ENCODE measurements at regions of chr4 and their contacts with region 1.

Region 1: DNA sequence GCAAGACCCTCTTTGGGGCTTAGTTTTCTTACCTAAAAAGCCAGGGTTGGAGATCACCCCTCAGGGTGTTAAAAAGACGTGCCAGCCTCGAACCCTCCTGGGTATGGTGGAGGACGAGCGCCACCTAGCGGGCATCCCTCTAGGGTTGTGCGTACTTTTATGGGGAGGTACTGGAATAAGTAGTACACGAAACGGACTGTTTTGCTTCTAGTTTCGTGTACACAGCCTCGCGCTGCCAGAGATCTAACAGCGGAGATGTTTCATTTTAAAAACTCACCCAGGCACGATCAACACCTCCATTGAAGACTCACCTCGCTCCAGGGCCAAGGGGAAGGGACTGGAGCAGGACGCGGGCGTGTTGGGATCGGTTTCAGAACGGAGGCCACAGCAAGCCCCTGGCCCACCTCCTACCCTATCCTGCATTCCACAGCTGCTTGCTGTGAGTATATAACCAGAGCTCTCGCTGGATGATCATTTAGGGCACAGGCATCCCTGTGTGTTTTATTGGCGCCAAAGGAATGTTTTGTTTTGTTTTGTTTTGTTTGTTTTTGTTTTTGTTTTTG is 4.8 kb upstream of the NKX3-2 start:
- DNase-seq: peak; percentile 86
- CTCF ChIP-seq: peak; percentile 84

Region 2: DNA sequence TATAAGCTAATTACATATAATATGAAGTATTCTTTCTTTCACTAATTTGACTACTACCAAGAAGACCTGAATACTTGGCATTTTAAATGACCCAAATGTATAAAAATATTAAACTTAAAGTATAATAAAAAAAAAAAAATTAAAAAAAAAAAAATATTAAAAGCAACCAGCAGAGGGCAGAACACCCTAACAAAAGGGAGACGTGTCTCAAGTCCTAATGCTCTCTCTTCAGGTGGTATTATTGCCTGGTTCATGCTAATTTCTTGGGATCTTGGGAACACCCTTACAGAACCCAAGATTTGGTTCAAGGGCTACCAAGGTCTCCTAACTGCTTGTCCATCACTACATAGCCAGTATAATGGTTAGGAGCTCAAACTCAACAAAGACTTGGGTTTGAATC is 819.7 kb before region 1 on chr4:
- CTCF ChIA-PET with region 1: interaction called, 13 read pairs
- POLR2A ChIA-PET with region 1: no interaction called
- DNase-seq: peak; percentile 16
- CTCF ChIP-seq: no peak

Region 3: DNA sequence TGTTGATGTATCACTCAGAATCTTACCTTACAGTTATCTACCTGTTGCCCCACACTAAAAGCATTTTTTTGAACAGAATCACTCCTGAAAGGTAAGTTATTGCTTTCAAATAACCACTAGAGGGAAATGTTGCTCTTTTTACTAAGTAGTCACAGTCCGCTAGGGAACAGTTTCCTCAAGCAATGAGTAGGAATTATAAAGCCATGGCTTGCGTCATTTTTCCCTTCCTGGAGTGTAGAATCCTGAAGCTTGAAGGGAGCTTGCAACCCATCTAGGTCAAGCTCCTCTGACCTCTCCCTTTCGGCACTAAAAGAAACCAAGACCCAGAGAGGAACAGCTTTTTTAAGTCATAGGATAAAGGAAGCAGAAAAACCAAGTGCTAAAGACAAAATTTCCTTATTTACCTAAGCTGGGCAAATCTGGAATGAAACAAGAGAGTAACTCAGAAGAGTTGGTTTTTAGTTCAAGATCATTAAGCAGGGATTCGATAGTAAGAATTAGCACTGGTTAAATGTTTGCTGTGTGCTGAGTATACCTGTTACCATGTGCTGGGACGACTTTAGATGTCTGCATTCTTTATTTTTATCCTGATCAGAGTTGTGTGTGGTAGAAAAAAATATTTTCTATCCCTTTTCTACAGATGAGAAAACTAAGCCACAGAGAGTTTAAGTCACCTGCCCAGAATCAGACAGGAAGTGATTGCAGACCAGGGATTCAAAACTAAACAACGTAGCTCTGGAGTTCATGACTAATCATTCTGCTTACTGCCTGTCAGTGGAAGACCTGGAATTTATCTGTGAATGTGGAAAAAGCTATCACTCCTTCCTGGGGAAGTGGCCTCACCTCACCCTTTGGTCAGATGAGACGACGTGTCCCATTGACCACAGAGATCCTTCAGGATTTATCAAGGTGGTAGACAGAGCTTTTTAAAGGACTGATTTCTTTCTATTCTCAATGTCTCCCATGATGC is 696.4 kb before region 1 on chr4:
- CTCF ChIA-PET with region 1: interaction called, 11 read pairs
- POLR2A ChIA-PET with region 1: no interaction called
- DNase-seq: peak; percentile 23
- CTCF ChIP-seq: peak; percentile 53

Region 4: DNA sequence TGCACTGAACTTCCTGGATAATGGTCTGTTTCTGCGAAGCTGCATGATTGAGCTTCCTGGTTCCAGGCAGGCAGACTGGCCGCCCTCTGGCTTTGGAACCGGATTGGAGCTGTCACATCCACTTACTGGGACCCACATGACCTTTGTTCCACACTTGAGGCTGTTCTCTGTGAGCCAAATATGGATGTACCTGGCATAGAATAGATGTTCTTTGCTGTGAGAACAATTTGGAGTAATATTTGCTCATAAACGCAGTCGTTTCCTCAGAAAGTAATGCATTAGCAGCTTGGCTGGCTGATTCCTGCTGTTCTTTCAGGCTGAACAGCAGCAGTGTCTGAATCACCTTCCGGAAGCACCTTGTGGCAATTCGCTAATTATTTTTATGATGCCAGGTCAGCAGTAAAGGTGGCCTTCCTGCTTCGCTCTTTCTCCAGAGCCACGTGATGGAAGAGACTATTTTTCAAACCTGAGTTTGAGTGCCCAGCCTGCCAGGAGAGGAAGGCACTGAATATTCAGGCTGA is 156.5 kb after region 1 on chr4:
- CTCF ChIA-PET with region 1: no interaction called
- POLR2A ChIA-PET with region 1: no interaction called
- DNase-seq: no peak
- CTCF ChIP-seq: no peak

Measured in GM10248 (cell line).